ENCODE measurements at regions of chrX and their contacts with region 1.

Region 1: GRCh38 chrX:19100586-19100985 is 21.7 kb downstream of the ADGRG2 start:
- DNase-seq: no peak

Region 2: GRCh38 chrX:19303256-19303880 is 202.8 kb after region 1 on chrX:
- intact Hi-C with region 1: loop called in 1 of 2 experiments (anchors 5 kb)
- DNase-seq: no peak